Panc1 (cell line): ENCODE measurements at regions of chr19 and their contacts with region 1.

Region 1: GRCh38 chr19:45469132-45469944 is 1.5 kb downstream of the FOSB start:
- DNase-seq: no peak
- ATAC-seq: peak; percentile 83
- H3K4me3 ChIP-seq: peak overlapping the region; percentile 75 to 84
- H3K27ac ChIP-seq: peak overlapping the region; percentile 59; the same call in 1 of the 2 replicates
- H3K4me1 ChIP-seq: peaks cover 4% of the 10 kb centered on the region; the same call in 1 of the 2 replicates
- H3K27me3 ChIP-seq: no peaks in the 10 kb centered on the region
- CTCF ChIP-seq: no peak

Region 2: DNA sequence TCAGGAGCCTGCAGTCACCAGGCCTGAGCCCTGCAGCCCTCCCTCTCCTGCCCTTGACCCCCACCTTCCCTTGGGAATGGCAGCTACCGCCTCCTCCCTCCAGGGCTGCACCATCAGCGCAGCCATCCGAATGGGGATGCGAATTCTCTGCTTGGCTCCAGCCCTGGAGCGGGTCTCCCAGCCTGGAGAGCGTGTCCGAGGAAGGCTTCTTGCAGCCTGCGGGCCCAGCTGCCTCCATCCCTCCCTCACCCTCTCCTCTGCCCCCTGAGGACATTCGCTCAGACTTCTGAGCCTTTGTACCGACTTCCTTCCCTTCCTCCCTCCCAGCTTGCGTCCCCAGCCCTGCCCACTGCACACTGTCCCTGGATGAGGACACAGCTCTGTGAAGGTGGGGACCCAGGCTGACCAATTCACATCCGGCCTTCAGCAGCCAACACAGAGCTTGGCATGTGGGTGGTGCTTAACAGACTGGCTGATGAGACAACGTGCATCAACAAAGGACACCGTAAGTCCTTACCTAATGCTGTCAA is 302.6 kb before region 1 on chr19:
- CTCF ChIA-PET with region 1: interaction called, 13 read pairs
- POLR2A ChIA-PET with region 1: no interaction called
- in situ Hi-C with region 1: no loop called
- intact Hi-C with region 1: no loop called
- DNase-seq: no peak
- ATAC-seq: no peak
- H3K4me3 ChIP-seq: no peak overlapping the region
- H3K27ac ChIP-seq: no peak overlapping the region
- H3K4me1 ChIP-seq: no peaks in the 10 kb centered on the region
- H3K27me3 ChIP-seq: no peaks in the 10 kb centered on the region
- CTCF ChIP-seq: no peak

Region 3: DNA sequence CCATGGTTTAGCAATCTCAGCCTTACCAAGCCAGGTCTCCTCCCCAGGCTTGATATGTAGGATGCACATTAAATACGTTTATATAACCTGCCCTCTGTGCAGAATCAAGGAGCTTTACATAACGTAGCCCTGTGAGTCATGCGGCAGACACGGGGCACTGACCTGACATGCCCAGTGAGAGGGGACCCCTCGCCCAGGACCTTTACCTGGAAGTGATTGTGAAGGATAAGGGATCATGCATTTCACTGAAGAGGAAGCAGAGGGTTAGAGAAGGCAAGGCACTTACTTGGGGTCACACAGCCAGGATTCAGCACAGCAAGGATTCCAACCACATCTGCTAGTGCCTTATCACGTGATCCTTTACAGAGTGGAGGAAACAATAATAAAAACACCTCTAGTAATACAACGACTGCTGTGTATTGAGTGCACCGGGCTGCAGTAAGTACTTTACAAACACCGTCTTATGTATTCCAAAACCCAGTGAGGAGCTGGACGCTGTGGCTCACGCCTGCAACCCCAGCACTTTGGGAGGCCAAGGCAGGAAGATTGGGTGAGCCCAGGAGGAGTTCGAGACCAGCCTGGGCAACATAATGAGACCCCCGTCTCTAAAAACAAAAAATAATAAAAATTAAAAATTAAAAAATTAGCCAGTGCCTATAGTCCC is 20.3 kb before region 1 on chr19:
- CTCF ChIA-PET with region 1: no interaction called
- POLR2A ChIA-PET with region 1: interaction called, 20 read pairs
- in situ Hi-C with region 1: no loop called
- intact Hi-C with region 1: no loop called
- DNase-seq: no peak
- ATAC-seq: no peak
- H3K4me3 ChIP-seq: no peak overlapping the region
- H3K27ac ChIP-seq: no peak overlapping the region
- H3K4me1 ChIP-seq: peaks cover 15% of the 10 kb centered on the region; the same call in 1 of the 2 replicates
- H3K27me3 ChIP-seq: no peaks in the 10 kb centered on the region
- CTCF ChIP-seq: no peak

Region 4: GRCh38 chr19:45455707-45456499 is 13.4 kb before region 1 on chr19:
- CTCF ChIA-PET with region 1: no interaction called
- POLR2A ChIA-PET with region 1: interaction called, 20 read pairs
- in situ Hi-C with region 1: no loop called
- intact Hi-C with region 1: no loop called
- DNase-seq: peak; percentile 92
- ATAC-seq: peak; percentile 94
- H3K4me3 ChIP-seq: peak overlapping the region; percentile 8 to 41; a peak in 3 of 4 replicates
- H3K27ac ChIP-seq: peak overlapping the region; percentile 56
- H3K4me1 ChIP-seq: peaks cover 11% of the 10 kb centered on the region
- H3K27me3 ChIP-seq: no peaks in the 10 kb centered on the region
- CTCF ChIP-seq: no peak